ENCODE measurements at regions of chr3 and their contacts with region 1.

Region 1: DNA sequence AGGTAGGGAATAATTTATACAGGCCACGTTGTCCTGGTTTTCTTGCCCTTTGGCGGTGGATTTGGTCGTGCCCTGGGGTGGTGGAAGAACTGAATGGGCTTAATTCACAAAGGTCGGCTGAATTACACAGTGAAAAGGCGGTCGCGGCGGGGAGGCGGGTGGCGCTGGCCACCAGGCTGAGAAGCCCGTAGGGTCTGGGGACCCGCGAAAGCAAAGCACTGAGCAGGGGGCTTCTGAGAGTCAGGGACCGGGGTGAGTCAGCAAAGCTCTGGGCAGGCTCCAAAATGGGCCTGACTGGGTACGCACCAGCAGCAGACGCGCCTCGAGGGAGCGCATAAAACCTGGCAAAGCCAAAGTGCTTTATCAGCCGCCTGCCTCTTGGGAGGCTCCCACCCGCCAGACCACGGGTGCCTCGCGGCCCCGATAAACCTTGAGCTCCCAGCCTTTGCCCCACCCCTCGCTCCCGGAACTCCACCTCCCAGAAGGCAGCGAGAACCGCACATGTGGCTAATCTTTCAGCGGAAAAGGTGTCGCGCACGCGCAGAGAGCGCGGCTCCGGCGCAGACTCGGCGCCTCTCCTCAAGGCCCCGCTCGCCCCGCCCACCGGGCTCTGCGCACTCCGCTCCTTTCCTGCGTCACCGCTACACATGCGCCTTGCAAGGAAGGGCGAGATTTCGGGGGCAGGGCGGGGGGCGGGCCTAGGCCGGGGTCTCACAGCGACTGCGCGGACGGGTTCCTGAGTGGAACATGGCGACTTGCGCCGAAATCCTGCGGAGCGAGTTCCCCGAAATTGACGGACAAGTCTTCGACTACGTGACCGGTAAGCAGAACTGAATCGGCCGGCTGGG is at the start of gene ABCF3:
- DNase-seq: peak; percentile 99
- H3K4me3 ChIP-seq: peak within 1 kb of the TSS; percentile 97
- H3K27ac ChIP-seq: peak within 1 kb of the TSS; percentile 43
- H3K4me1 ChIP-seq: peaks cover 16% of the 10 kb centered on the region
- CTCF ChIP-seq: no peak
- total RNA-seq, gene ABCF3: 38.9 and 51.6 TPM in 2 replicates

Region 2: GRCh38 chr3:184154885-184155643 is 30.6 kb before region 1 on chr3 and contains the start of gene DVL3:
- CTCF ChIA-PET with region 1: no interaction called
- POLR2A ChIA-PET with region 1: interaction called, 20 read pairs
- intact Hi-C with region 1: no loop called
- DNase-seq: peak; percentile 74
- H3K4me3 ChIP-seq: peak within 1 kb of the TSS; percentile 92
- H3K27ac ChIP-seq: peak within 1 kb of the TSS; percentile 52
- H3K4me1 ChIP-seq: peaks cover 23% of the 10 kb centered on the region
- CTCF ChIP-seq: no peak
- total RNA-seq, gene DVL3: 38.5 and 41.3 TPM in 2 replicates

Region 3: DNA sequence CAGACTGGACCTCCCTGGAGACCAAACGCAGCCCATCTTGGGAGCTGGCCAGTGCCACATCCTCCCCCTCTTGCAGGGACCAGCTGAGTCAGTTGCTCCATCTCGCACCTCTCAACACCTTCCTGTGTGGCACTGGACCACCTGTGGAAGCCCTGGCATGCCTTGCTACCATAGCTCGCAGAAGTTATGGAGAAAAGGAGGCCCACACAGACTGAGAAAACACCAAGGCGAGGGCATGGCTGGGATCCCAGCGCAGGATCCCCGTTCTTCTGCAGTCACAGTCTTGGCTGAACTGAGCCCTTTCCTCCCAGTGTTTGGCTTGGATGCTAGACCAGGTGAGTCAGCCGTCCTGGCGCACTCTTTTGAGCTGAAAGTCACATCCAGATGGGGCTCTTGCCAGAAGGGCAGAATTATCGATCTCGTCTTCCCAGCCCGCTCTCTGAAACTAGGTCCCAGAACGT is 241.0 kb after region 1 on chr3:
- CTCF ChIA-PET with region 1: no interaction called
- POLR2A ChIA-PET with region 1: no interaction called
- intact Hi-C with region 1: no loop called
- DNase-seq: no peak
- H3K4me3 ChIP-seq: no peak overlapping the region
- H3K27ac ChIP-seq: no peak overlapping the region
- H3K4me1 ChIP-seq: no peaks in the 10 kb centered on the region
- CTCF ChIP-seq: no peak

Measured in OCI-LY7 (cell line).